Mammary epithelial cell (primary cell): ENCODE measurements at regions of chr9 and their contacts with region 1.

Region 1: GRCh38 chr9:71806901-71807307 is 38.6 kb upstream of the CEMIP2 start:
- DNase-seq: peak; percentile 64
- H3K4me3 ChIP-seq: no peak overlapping the region
- H3K27ac ChIP-seq: no peak overlapping the region
- H3K4me1 ChIP-seq: no peaks in the 10 kb centered on the region
- H3K27me3 ChIP-seq: no peaks in the 10 kb centered on the region
- CTCF ChIP-seq: peak; percentile 97 to 99

Region 2: DNA sequence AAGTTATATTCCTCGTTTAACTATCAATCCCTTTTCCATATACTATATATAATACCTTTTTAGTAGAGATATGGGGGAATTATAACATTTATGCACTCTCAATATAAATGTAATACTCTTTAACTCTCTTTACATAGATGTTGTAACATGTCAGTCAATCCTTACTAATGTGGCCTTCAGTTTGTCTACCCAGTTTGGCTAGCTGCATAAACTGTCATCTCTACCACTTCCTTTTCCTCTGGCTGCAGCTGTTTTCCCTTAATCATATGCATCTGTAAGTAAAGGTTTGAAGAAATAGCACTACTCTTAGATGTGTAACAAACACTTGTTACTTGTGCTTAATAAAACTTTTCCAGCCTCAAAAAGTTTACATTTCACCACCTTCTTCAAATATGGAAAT is 90.7 kb after region 1 on chr9:
- CTCF ChIA-PET with region 1: no interaction called
- dilution Hi-C with region 1: no loop called
- in situ Hi-C with region 1: no loop called
- intact Hi-C with region 1: no loop called
- DNase-seq: no peak
- H3K4me3 ChIP-seq: no peak overlapping the region
- H3K27ac ChIP-seq: no peak overlapping the region
- H3K4me1 ChIP-seq: peaks cover 17% of the 10 kb centered on the region
- H3K27me3 ChIP-seq: no peaks in the 10 kb centered on the region
- CTCF ChIP-seq: no peak

Region 3: DNA sequence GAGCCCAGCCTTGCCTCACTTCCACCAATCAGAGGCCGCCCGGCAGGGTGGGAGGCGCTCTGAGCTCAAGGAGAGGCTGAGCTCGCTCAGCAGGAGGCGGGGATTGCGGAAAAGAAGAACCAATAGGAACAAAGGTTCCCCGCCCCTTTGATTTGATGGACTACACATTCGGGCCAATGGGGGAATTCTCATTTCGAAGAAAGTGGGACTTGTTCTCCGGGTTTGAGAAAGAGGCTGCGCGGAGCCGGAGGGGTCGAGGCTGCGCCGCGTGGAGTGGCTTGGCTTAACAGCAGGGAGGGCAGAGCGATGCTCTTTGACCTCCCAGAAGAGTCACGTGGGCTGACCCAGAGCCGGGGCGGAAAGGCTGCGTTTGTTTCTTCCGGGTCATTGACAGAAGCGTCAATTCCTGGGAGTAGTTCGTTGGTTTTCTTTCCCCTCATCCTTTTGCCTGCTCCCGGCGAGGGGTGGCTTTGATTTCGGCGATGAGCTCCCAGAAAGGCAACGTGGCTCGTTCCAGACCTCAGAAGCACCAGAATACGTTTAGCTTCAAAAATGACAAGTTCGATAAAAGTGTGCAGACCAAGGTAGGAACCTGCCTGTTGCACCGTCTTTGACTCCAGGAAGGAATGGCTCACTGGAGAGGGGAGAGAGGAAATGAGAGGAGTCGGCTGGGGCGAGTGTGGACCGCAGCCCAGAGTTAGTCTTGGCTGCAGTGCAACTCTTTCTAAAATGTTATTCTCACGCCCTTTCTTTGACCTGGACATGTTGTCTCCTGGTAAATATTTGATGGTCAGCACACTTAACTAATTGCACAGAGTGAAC is 104.6 kb after region 1 on chr9 and contains the start of gene C9orf85:
- CTCF ChIA-PET with region 1: no interaction called
- dilution Hi-C with region 1: no loop called
- in situ Hi-C with region 1: no loop called
- intact Hi-C with region 1: loop called (anchors 5 kb)
- DNase-seq: peak; percentile 100
- H3K4me3 ChIP-seq: peak within 1 kb of the TSS; percentile 79 to 84 (median 80)
- H3K27ac ChIP-seq: peak within 1 kb of the TSS; percentile 63
- H3K4me1 ChIP-seq: peaks cover 13% of the 10 kb centered on the region
- H3K27me3 ChIP-seq: no peaks in the 10 kb centered on the region
- CTCF ChIP-seq: no peak
- total RNA-seq, gene C9orf85: 13.7 to 20.4 TPM

Region 4: GRCh38 chr9:71984403-71984802 is 177.5 kb after region 1 on chr9:
- CTCF ChIA-PET with region 1: no interaction called
- dilution Hi-C with region 1: no loop called
- in situ Hi-C with region 1: loop called in 1 of 2 experiments (anchors 25 kb)
- intact Hi-C with region 1: no loop called
- DNase-seq: peak; percentile 38
- H3K4me3 ChIP-seq: no peak overlapping the region
- H3K27ac ChIP-seq: no peak overlapping the region
- H3K4me1 ChIP-seq: no peaks in the 10 kb centered on the region
- H3K27me3 ChIP-seq: no peaks in the 10 kb centered on the region
- CTCF ChIP-seq: no peak

Region 5: GRCh38 chr9:72203205-72203803 is 396.4 kb after region 1 on chr9:
- CTCF ChIA-PET with region 1: no interaction called
- dilution Hi-C with region 1: no loop called
- in situ Hi-C with region 1: no loop called
- intact Hi-C with region 1: loop called (anchors 5 kb)
- DNase-seq: peak; percentile 40
- H3K4me3 ChIP-seq: no peak overlapping the region
- H3K27ac ChIP-seq: no peak overlapping the region
- H3K4me1 ChIP-seq: no peaks in the 10 kb centered on the region
- H3K27me3 ChIP-seq: peaks cover 5% of the 10 kb centered on the region
- CTCF ChIP-seq: peak; percentile 61 to 86